Posterior cingulate gyrus (tissue), 11 donors: ENCODE measurements at regions of chr16 and their contacts with region 1.

Region 1: DNA sequence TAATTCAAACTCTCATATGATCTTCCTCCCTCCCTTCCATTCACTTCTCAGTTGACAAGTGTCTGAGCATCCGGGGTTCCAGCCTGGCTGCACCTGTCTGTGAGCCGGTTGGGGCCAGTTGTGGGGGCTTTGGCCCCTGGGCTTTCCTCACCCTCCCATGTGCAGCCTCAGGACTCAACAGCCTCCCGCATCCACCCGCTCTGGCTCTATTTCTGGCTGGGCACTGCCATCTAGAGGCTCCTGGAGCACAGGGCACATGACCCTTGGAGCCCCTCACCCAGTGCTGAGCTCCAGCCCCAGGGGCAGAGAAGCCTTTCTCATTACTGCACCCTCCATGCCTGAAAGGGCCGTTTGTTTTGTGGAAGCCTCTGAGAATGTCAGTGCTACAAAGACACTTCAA is 43.3 kb downstream of the HAPSTR1 start:
- DNase-seq: peak in 7 of 10 donors; percentile 26 to 90 (median 45)

Region 2: GRCh38 chr16:8660841-8661301 is 473.9 kb before region 1 on chr16:
- intact Hi-C with region 1: loop called (anchors 10 kb)
- DNase-seq: peak; percentile 52 to 96 (median 67)